G401 (cell line): ENCODE measurements at regions of chr22 and their contacts with region 1.

Region 1: DNA sequence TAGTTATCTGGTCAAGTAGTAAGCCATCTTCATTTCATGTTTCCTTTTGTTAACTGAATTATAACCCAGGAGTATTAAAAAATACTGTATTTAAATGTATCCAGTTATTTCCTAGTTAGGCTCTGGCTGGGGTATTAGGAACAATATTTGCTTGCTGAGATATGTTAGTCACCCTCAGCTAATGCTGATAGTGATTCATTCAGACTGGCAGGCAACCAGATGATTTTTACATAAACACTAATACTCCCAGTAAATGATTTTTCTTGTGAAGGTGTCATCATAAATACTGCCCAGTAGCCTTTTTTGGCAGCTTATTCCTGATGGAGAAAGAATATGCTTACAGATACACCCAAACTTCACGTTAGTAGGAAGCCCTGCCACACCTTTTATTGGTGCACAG is 8.1 kb downstream of the YWHAH start:
- DNase-seq: no peak

Region 2: DNA sequence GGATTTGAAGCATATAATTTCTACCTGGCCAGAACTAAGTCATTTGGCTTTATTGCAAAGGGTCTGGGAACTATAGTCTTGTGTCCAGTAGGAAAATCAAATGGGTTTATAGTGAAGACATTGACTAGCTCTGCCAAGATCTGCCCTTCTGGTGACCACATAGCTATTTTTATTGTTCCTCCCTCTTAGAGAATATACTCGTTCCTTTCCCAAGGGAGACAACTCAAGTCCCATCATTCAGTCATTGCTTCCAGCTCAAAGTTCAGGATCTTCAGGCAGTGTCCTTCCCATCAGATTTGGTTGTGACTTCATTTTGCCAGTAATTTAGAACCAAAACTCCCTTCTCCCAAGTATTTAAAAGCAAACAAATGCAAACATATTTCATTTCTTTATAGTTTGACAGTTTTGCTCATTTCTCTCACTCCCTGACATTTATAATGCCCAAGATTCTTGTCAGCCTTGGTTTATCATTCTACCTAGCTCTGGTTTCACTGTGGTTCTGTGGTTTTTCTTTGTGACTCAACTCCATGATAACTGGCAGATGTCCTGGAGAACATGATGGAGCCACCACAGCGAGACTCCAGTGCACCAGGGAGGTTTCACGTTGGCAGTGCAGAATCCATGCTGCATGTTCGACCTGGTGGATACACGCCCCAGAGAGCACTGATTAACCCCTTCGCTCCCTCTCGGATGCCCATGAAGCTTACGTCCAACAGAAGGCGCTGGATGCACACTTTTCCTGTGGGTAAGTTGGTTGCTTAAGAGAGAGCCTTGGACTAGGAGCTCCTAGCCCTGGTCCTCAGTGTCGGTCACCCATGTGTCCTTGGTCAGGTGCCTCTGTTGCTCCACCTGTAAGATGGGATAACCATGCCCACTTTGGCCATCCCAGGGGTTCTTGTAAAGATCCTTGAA is 133.7 kb before region 1 on chr22:
- in situ Hi-C with region 1: loop called (anchors 10 kb)
- DNase-seq: no peak

Region 3: GRCh38 chr22:31911565-31912406 is 40.7 kb before region 1 on chr22:
- in situ Hi-C with region 1: no loop called
- DNase-seq: no peak

Region 4: GRCh38 chr22:32058656-32059260 is 106.3 kb after region 1 on chr22:
- in situ Hi-C with region 1: no loop called
- DNase-seq: no peak